Natural killer cell (primary cell): ENCODE measurements at regions of chr11 and their contacts with region 1.

Region 1: DNA sequence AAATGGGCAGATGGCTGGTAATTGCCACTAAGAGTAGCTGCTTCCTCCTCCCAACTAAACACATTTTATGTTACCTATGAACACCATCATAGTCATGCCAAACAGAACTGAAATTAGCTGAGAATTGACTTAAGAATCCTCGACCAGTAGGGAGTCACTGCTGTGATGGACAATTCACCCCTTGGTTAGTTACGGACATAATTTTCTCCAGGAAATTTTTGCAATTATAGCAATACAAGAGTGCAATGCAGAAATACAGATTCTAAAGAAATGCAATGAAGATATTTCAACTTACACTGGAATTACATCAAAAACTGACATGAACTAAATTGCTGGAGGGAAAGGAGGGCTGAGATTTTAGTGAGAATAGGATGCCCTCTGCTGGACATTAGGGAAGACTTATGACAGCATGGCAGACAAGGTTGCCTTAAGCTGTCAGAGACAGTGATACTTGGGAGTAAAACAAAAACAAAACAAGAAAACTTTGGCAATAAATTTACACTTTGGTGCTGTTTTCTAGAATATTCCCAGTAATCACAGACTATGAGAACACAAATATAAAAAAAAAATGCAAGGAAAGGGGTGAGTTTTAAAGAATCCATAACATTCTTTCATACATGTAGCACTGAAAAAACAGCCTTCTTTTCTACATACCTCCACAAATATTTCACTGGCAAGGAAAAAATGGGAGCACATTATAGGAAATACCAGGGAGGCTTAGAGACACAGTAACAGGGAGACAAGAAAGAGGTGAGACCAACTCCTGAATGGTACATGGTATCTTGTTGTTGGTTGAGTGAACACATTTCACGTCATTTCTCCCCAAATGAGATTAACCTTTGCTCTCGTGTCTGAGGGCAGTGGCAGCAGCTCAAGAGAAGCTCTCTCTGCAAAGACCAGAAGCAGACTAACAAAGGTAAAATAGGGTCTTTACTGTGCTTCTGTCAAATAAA is 11.2 kb upstream of the PPP2R1B start:
- DNase-seq: peak in 1 of 2 donors; percentile 82
- ATAC-seq: peak; percentile 81 to 91 (median 88)
- H3K4me3 ChIP-seq: no peak overlapping the region
- H3K4me3 Mint-ChIP-seq: no peak overlapping the region
- H3K27ac ChIP-seq: no peak overlapping the region
- H3K27ac Mint-ChIP-seq: no peak overlapping the region
- H3K4me1 ChIP-seq: no peaks in the 10 kb centered on the region
- H3K4me1 Mint-ChIP-seq: no peaks in the 10 kb centered on the region
- H3K27me3 ChIP-seq: no peaks in the 10 kb centered on the region
- H3K27me3 Mint-ChIP-seq: no peaks in the 10 kb centered on the region
- CTCF ChIP-seq: peak; percentile 68

Region 2: DNA sequence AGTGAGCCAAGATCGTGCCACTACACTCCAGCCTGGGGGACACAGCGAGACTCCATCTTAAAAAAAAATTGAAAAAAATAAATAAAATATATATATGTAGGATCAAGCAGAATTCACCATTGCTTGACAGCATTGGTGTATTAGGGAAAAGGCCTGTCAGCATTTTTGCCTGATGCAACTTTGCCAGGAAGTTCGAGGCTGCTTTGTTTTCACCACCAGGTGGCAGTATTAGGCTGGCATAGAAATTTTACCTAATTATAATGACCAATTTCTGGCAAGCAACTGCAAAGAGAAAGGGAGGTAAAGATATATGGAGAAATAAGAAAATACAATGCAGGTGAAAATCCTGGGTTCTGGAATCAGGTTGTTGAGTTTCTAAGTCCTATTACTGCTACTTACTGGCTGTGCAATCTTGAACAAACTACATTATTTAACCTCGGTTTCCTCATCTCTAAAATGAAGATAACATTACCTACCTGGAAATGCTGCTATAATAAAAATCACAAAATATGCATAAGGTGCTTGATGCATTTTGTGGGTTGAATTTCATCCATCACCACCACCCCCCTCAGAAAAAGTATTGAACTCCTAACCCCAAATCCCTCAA is 212.2 kb before region 1 on chr11:
- intact Hi-C with region 1: loop called (anchors 1 kb)
- DNase-seq: peak; percentile 41 to 80
- ATAC-seq: peak; percentile 49 to 57 (median 53)
- H3K4me3 ChIP-seq: no peak overlapping the region
- H3K4me3 Mint-ChIP-seq: no peak overlapping the region
- H3K27ac ChIP-seq: no peak overlapping the region
- H3K27ac Mint-ChIP-seq: no peak overlapping the region
- H3K4me1 ChIP-seq: no peaks in the 10 kb centered on the region
- H3K4me1 Mint-ChIP-seq: no peaks in the 10 kb centered on the region
- H3K27me3 ChIP-seq: no peaks in the 10 kb centered on the region
- H3K27me3 Mint-ChIP-seq: peaks cover 0 to 18% of the 10 kb centered on the region in 2 donors
- CTCF ChIP-seq: peak; percentile 91

Region 3: DNA sequence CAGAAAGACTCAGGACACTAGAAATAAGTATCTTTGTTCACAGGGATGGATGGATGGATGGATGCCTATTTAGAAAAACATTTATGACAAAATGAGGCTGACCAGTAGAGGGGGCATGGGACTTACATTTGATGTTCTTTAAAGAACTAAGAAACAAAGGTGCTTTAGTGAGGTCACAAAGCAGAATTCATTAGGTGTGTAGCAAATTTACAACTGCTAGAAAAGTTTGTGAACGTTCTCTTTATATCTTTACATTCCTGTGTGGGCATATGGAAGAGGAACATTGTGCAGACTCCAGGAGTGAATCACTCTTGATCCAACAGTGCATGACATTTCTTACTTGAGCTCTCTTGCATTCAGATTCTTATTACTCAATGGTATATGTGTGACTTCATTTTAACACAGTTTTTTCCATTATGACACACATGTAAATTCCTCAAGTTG is 191.0 kb before region 1 on chr11:
- intact Hi-C with region 1: loop called (anchors 1 kb)
- DNase-seq: peak in 1 of 2 donors; percentile 79
- ATAC-seq: peak; percentile 53 to 73 (median 67)
- H3K4me3 ChIP-seq: no peak overlapping the region
- H3K4me3 Mint-ChIP-seq: no peak overlapping the region
- H3K27ac ChIP-seq: no peak overlapping the region
- H3K27ac Mint-ChIP-seq: no peak overlapping the region
- H3K4me1 ChIP-seq: no peaks in the 10 kb centered on the region
- H3K4me1 Mint-ChIP-seq: no peaks in the 10 kb centered on the region
- H3K27me3 ChIP-seq: no peaks in the 10 kb centered on the region
- H3K27me3 Mint-ChIP-seq: peaks cover 0 to 3% of the 10 kb centered on the region in 2 donors
- CTCF ChIP-seq: peak; percentile 77

Region 4: GRCh38 chr11:111694851-111695250 is 82.5 kb before region 1 on chr11:
- intact Hi-C with region 1: no loop called
- DNase-seq: no peak
- ATAC-seq: no peak
- H3K4me3 ChIP-seq: no peak overlapping the region
- H3K4me3 Mint-ChIP-seq: no peak overlapping the region
- H3K27ac ChIP-seq: no peak overlapping the region
- H3K27ac Mint-ChIP-seq: no peak overlapping the region
- H3K4me1 ChIP-seq: peaks cover 2% of the 10 kb centered on the region
- H3K4me1 Mint-ChIP-seq: peaks cover 8 to 17% of the 10 kb centered on the region in 2 donors
- H3K27me3 ChIP-seq: no peaks in the 10 kb centered on the region
- H3K27me3 Mint-ChIP-seq: no peaks in the 10 kb centered on the region
- CTCF ChIP-seq: no peak

Region 5: GRCh38 chr11:111949519-111950426 is 172.4 kb after region 1 on chr11:
- intact Hi-C with region 1: no loop called
- DNase-seq: no peak
- ATAC-seq: peak; percentile 72 to 88 (median 85)
- H3K4me3 ChIP-seq: no peak overlapping the region
- H3K4me3 Mint-ChIP-seq: peak overlapping the region; percentile 67
- H3K27ac ChIP-seq: no peak overlapping the region
- H3K27ac Mint-ChIP-seq: peak overlapping the region; percentile 45 to 59
- H3K4me1 ChIP-seq: peaks cover 7% of the 10 kb centered on the region
- H3K4me1 Mint-ChIP-seq: peaks cover 11 to 22% of the 10 kb centered on the region in 2 donors
- H3K27me3 ChIP-seq: no peaks in the 10 kb centered on the region
- H3K27me3 Mint-ChIP-seq: peaks cover 0 to 1% of the 10 kb centered on the region in 2 donors
- CTCF ChIP-seq: no peak